Activated T-helper 2 cell treated with anti-CD3 and anti-CD28 coated beads, Interferon-gamma antibody, Interleukin-2, Interleukin-4, amounts not matched to agents 10 μg/mL and 5 μg/mL and 100 μg/mL, durations not matched to agents 14 hours and 24 hours and 36 hours (primary cell): ENCODE measurements at regions of chr15 and their contacts with region 1.

Region 1: GRCh38 chr15:90660195-90660998 is 56.7 kb upstream of the BLM start:
- DNase-seq: peak; percentile 73
- H3K4me3 Mint-ChIP-seq: peak overlapping the region; percentile 74
- H3K27ac Mint-ChIP-seq: peak overlapping the region; percentile 82
- H3K4me1 Mint-ChIP-seq: peaks cover 72% of the 10 kb centered on the region
- H3K27me3 Mint-ChIP-seq: no peaks in the 10 kb centered on the region

Region 2: GRCh38 chr15:90680371-90680935 is 20.1 kb after region 1 on chr15:
- intact Hi-C with region 1: loop called (anchors 1 kb)
- DNase-seq: no peak
- H3K4me3 Mint-ChIP-seq: no peak overlapping the region
- H3K27ac Mint-ChIP-seq: peak overlapping the region; percentile 79
- H3K4me1 Mint-ChIP-seq: peaks cover 52% of the 10 kb centered on the region
- H3K27me3 Mint-ChIP-seq: no peaks in the 10 kb centered on the region

Region 3: DNA sequence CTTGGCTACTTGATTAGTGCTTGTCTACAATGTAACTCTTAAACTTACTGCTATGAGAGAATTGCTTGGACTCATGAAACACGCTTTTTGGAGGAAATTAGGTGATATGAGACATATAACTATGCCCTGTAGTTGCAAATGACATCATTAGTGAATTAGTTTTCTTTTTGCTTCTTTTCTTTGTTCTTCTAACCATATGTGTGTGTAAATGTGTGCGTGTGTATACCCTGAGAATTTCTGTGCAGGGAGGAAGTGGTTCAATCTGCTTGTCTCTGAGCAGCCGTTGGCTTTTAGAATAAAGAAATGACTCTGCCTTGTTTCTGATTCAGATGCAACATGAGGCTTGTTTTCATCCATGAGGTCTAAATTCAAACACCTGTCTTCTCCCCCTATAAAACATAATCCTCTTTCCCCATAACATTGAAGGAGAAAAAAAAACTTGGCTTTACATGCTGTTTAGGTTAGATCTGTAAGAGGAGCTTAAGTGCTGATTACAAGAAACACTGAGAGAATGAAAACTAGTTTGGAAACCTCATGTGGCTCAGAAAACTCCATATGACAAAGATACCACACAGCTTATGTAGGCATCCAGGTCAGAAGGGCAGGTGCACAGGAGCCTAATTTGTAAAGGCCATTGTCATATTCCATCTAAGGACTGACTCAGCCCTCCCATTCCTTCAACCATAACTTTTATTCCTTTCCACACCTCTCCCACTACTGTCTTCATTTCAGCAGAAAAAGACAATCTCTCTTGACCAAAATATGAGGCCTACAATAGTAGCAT is 26.2 kb after region 1 on chr15:
- intact Hi-C with region 1: loop called (anchors 1 kb)
- DNase-seq: peak; percentile 53
- H3K4me3 Mint-ChIP-seq: peak overlapping the region; percentile 30
- H3K27ac Mint-ChIP-seq: peak overlapping the region; percentile 98
- H3K4me1 Mint-ChIP-seq: peaks cover 50% of the 10 kb centered on the region
- H3K27me3 Mint-ChIP-seq: no peaks in the 10 kb centered on the region

Region 4: DNA sequence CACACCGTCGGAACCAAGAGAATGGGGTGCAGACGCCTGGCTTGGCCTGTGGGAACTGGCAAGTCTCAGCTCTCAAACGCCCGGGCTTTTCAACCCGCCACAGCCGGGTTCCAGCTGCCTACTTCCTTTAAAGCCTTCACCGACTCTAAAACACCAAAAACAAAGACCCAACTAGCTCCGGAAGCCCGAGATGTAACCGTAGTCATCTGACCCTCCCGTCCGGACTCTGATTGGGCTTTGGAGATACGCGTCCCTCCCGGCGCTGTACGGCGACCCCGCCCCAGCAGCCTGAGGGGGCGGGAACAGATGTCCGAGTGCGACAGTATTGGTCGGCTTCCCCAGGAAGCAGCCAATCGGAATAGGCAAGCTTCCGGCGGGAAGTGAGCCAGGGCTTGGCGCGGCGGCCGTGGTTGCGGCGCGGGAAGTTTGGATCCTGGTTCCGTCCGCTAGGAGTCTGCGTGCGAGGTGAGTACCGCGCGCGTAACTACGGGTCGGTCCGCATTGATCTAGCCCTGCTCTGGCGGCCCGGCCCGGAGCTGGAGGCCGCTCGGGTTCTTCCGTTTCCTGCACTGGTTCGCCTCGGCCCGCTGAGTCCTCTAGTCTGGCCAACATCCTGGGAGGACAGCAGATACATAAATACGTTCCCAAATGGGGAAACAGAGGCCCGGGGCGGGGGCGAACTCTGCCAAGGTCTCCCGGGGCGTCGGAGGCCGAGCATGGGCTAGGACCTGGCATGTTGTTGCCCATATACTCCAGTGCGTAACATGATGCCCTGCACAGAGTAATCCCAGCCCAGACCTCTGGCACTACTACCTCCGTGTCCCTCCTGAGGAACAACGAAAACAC is 56.8 kb after region 1 on chr15 and contains the start of gene BLM:
- intact Hi-C with region 1: loop called (anchors 2 kb)
- DNase-seq: peak; percentile 96
- H3K4me3 Mint-ChIP-seq: peak within 1 kb of the TSS; percentile 87
- H3K27ac Mint-ChIP-seq: peak within 1 kb of the TSS; percentile 91
- H3K4me1 Mint-ChIP-seq: peaks cover 21% of the 10 kb centered on the region
- H3K27me3 Mint-ChIP-seq: no peaks in the 10 kb centered on the region
- total RNA-seq, gene BLM: 58.9 and 65.3 TPM in 2 replicates

Region 5: DNA sequence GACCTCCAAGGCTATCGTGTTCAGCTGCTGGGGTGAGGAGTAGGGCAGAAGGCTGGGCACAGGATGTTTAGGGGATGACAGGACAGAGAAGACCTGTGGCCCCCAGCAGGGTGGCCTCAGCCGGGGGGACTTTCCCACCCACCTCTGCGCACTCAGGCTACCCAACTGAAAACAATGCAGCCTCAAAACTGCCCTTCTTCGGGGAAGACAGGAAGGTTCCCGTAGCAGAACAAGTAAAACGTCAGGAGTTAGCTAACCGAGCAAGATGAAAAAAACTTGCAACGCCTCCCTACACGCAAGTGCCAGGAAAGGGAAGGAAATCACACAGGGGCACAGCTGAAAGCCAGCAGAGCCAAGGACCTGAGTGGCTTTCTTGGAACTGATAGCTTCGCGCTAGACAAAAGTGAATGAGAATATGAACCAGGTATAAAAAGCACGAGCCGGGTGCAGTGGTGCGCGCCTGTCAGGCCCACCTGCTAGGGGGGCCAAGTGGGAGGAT is 169.6 kb after region 1 on chr15:
- intact Hi-C with region 1: loop called (anchors 2 kb)
- DNase-seq: peak; percentile 57
- H3K4me3 Mint-ChIP-seq: peak overlapping the region; percentile 31
- H3K27ac Mint-ChIP-seq: peak overlapping the region; percentile 96
- H3K4me1 Mint-ChIP-seq: peaks cover 39% of the 10 kb centered on the region
- H3K27me3 Mint-ChIP-seq: no peaks in the 10 kb centered on the region